ENCODE measurements at regions of chr9 and their contacts with region 1.

Region 1: DNA sequence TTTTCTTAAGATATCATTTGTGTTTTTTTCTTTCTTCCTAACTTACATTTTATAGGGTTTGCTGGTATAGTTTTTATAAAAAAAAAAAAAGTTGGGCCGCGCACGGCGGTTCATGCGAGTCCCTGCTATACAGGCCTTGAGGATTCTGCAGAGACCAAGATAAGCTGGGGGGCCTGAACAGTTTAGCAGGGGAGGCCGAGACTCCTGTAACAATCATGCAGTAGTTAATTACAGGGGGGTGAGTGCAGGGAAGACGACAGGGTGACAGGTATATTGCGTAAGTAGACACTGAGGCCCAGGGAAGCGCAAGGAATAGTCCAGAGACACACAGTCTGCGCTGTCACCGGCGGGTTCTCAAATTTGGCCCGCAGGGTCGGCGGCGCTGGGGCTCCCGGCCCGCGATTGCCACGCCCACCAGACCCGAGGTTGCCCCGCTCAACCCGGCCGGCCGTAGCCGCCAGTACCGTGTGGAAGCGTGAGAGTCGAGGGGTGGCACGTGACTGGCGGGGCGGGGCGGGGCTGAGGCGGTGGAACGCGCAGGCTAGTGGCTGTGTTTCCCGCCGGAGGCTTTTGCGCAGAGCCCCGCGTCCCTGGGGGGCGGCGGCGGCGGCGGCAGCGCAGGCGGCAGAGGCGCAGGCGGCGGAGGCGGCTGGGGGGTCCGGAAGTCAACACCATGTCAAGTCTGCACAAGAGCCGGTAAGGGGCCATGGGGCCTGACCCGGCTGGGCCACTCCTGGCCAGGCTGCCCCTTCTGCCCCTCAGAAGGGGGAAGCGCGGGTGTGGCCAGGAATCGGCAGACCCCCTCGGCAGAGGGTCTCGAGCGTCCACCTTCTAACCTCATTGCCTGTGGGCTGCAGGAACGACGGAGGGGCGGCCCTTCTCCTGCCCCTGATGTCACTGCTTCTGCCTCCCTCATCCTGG is at the start of gene TBC1D13:
- DNase-seq: peak; percentile 91 to 93 (median 92)
- ATAC-seq: peak; percentile 87 to 98 (median 98)
- H3K4me3 ChIP-seq: peak within 1 kb of the TSS; percentile 77 to 100 (median 95)
- H3K27ac ChIP-seq: peak within 1 kb of the TSS; percentile 70 to 92 (median 87)
- H3K4me1 ChIP-seq: peaks cover 0 to 26% (median 15%) of the 10 kb centered on the region in 12 donors
- H3K27me3 ChIP-seq: no peaks in the 10 kb centered on the region
- CTCF ChIP-seq: no peak
- POLR2A ChIP-seq: peak in 1 of 2 donors; percentile 73
- total RNA-seq, gene TBC1D13: 12.1 to 27.3 (median 18.4) TPM

Region 2: DNA sequence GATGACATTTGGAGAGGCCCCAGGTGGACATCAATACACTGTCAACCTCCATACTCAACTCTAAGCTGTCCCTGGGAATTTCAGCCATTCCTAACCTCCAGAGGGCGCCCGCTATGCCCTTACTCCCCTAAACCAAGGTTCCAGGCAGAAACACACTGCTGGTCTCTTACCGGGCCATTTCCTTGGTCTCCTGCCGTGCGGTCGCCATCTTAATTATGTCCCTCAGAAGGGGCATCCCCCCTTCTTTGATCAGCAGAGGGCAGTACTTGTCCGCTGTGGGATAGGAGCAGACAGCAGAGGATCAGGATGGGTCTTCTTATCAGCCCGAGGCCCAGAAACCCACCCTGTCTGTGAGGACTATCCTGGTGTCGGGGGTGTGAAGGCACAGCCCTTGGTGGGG is 53.7 kb before region 1 on chr9:
- intact Hi-C with region 1: loop called in 1 of 10 experiments (anchors 5 kb)
- DNase-seq: peak in 4 of 5 donors; percentile 50 to 75 (median 62)
- ATAC-seq: peak in 3 of 4 donors; percentile 81 to 83 (median 82)
- H3K4me3 ChIP-seq: peak overlapping the region in 1 of 12 donors; percentile 5
- H3K27ac ChIP-seq: peak overlapping the region in 4 of 12 donors; percentile 34 to 64 (median 48)
- H3K4me1 ChIP-seq: peaks cover 0 to 8% (median 0%) of the 10 kb centered on the region in 12 donors
- H3K27me3 ChIP-seq: no peaks in the 10 kb centered on the region
- CTCF ChIP-seq: peak; percentile 33 to 71 (median 54)
- POLR2A ChIP-seq: no peak

Region 3: DNA sequence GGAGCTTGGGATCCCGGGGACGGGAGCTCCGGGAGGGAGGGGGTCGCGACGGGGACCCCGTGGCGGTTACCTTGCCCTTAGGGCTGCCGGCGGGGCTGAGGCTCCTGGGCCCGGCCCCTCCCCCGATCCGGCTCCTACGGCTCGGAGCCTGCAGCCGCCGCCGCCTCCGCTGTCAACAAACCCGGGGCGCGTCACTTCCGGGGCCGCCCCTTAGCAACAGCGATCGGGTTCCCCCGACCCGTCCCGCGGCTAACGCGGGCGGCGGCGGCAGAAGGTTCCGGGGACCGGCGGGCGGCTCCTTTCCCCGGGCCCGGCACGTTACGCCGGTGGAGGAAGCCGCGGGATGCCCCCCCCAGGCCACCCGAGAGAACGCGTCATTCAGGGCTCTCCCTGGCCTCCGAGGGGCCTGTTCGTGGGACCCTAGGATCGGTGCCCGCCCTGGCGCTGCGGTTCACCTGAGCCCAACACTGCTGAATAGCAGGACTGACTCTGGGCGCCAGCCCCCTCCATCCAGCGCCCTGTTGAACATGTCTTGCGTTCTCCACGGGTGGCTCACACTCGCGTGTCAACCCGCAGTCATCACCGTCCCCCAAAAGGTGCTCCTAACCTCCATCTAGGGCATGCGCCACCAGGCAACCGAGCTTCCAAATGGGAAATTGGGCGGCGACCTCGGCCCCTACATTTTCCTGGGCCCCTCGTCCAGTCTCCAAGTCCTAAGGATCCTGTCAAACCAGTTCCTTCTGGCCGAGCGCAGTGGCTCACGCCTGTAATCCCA is 15.0 kb before region 1 on chr9 and contains the start of gene ZER1:
- intact Hi-C with region 1: loop called in 5 of 10 experiments (anchors 1 to 2 kb)
- DNase-seq: peak; percentile 94 to 97 (median 95)
- ATAC-seq: peak; percentile 93 to 98 (median 98)
- H3K4me3 ChIP-seq: peak within 1 kb of the TSS; percentile 70 to 100 (median 86)
- H3K27ac ChIP-seq: peak within 1 kb of the TSS; percentile 81 to 98 (median 92)
- H3K4me1 ChIP-seq: peaks cover 0 to 33% (median 21%) of the 10 kb centered on the region in 12 donors
- H3K27me3 ChIP-seq: no peaks in the 10 kb centered on the region
- CTCF ChIP-seq: peak in 1 of 12 donors; percentile 3
- POLR2A ChIP-seq: peak in 1 of 2 donors; percentile 80
- total RNA-seq, gene ZER1: 53.4 to 163 (median 62.3) TPM

Region 4: DNA sequence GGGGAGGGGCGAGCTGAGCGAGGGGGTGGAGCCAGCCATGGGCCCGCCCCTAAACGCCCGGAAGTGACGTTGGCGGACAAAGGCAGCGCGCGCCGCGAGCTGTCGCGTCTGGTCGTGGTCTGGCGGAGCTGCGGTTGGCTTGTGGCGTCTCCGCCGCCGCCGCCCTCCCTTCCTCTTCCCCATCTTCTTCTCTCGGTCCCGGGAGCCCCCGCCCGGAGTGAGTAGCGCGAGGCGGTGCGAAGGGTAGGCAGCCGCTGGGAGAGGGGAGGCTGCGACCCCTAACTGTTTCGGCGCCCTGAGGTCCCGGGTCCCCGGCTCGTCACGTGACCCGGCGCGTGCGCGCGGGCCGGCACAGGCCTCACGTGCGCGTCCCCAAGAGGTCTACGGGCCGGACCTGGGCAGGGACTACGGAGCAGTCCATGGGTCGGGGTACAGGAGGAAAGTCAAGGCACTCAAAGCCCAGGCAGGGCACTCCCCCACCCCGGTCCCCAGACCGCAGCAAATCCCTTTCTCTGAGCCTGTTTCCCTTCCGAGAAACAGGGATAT is 839.2 kb after region 1 on chr9 and contains the start of gene NTMT1:
- intact Hi-C with region 1: no loop called
- DNase-seq: peak; percentile 86 to 95 (median 91)
- ATAC-seq: peak; percentile 79 to 94 (median 92)
- H3K4me3 ChIP-seq: peak within 1 kb of the TSS; percentile 64 to 85 (median 72)
- H3K27ac ChIP-seq: peak within 1 kb of the TSS; percentile 60 to 98 (median 94)
- H3K4me1 ChIP-seq: peaks cover 16 to 66% (median 46%) of the 10 kb centered on the region in 12 donors
- H3K27me3 ChIP-seq: peaks cover 0 to 4% (median 0%) of the 10 kb centered on the region in 9 donors
- CTCF ChIP-seq: no peak
- POLR2A ChIP-seq: peak; percentile 79 to 96
- total RNA-seq, gene NTMT1: 39.0 to 76.7 (median 56.0) TPM

Measured in heart left ventricle (tissue), 16 donors.